GM10248 (cell line): ENCODE measurements at regions of chr19 and their contacts with region 1.

Region 1: GRCh38 chr19:860481-861101 is 1.1 kb downstream of the CFD start:
- DNase-seq: peak; percentile 82
- CTCF ChIP-seq: peak; percentile 27

Region 2: DNA sequence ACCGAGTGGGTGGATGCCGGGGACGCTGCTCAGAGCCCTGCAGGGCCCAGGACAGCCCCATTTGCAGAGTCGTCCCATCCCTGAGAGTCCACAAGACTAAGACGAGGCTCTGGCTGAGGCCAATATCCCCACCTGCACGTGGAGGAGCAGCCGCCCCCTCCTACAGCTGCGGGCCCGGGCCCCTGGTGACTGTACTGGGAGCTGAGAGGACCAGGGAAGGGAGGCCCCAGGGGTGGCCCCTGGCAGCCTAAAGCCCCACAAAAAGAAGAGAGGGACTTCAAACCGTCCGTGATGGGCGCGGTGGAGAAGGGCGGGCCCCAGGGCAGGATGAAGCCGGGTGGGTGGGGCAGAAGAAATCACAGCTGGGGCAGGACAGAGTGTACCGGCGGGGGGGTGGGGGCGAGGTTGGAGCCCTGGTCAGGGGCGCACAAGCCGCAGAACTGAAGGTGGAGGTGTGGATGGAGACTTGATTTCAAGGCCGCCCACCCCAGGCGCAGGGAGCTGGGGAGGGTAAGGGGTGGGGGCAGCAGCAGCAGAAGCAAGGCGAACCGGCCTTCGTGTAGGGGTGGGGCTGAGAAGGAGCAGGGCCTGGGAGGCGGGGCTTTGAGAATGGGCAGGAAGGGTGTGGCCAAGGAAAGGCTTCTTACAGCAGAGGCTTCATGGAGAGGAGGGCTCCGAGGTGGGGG is 11.8 kb after region 1 on chr19:
- CTCF ChIA-PET with region 1: interaction called, 23 read pairs
- POLR2A ChIA-PET with region 1: interaction called, 5 read pairs
- DNase-seq: peak; percentile 79
- CTCF ChIP-seq: no peak

Region 3: DNA sequence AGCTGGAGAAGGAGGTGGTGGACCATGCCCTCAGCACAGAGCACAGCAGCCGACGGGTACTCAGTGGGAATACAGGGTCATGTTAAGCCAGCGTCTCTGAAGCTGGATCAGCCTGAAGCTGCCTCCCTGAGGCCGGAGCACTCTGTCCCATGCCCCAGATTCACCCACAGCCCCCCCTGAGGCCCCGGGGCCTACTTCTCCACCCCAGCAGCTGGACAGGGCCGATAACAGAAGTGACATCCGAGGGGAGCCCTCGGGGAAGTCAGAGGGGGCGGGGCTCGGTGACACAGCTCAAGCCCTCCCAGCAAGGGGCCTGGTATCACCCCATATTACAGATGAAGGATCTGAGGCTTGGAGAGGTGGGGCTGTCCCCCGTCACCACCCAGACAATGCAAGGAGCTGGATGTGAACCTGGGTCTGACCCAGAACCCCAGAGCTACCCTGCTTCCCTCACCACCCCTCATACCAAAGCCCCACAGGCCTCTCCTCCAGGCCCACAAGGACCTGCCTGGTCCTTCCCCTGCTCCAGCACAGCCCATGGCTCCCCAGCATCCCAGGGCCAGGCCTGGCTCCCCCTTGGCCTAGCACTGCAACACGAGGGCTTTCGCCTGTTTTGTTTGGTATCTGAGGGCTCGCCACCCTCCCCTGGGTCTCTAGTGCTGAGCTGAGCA is 46.7 kb after region 1 on chr19:
- CTCF ChIA-PET with region 1: interaction called, 25 read pairs
- POLR2A ChIA-PET with region 1: interaction called, 4 read pairs
- DNase-seq: no peak
- CTCF ChIP-seq: no peak

Region 4: DNA sequence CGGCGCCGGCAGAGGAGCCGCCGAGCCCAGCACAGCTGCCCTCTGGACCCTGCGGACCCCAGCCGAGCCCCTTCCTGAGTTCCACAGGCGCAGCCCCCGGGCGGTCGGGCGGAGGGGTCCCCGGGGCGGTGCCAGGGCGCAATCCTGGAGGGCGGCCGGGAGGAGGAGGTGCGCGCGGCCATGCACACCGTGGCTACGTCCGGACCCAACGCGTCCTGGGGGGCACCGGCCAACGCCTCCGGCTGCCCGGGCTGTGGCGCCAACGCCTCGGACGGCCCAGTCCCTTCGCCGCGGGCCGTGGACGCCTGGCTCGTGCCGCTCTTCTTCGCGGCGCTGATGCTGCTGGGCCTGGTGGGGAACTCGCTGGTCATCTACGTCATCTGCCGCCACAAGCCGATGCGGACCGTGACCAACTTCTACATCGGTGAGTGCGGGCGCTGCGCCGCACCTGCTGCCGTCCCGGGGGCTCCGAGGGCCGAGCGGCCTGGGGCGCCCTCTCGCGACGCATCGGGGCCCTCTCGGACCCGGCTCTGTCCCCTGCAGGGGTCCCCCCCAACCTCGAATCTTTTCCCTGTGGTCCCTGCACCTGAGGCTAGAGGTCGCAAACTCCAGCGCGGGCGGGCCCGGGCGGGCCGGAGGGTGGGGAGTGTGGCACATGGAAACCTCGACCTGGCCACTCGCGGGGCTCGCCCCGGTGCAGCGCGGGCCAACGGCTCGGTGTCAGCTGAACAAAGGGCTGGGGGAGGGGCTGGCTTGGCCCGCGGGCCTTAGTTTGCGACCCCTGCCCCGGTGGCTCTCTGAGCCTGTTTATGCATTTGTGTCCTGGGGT is 56.9 kb after region 1 on chr19 and contains the start of gene KISS1R:
- CTCF ChIA-PET with region 1: interaction called, 26 read pairs
- POLR2A ChIA-PET with region 1: no interaction called
- DNase-seq: peak; percentile 74
- CTCF ChIP-seq: peak; percentile 72

Region 5: GRCh38 chr19:925526-926322 is 65.1 kb after region 1 on chr19 and contains the start of gene ARID3A:
- CTCF ChIA-PET with region 1: interaction called, 24 read pairs
- POLR2A ChIA-PET with region 1: no interaction called
- DNase-seq: peak; percentile 88
- CTCF ChIP-seq: no peak

Region 6: DNA sequence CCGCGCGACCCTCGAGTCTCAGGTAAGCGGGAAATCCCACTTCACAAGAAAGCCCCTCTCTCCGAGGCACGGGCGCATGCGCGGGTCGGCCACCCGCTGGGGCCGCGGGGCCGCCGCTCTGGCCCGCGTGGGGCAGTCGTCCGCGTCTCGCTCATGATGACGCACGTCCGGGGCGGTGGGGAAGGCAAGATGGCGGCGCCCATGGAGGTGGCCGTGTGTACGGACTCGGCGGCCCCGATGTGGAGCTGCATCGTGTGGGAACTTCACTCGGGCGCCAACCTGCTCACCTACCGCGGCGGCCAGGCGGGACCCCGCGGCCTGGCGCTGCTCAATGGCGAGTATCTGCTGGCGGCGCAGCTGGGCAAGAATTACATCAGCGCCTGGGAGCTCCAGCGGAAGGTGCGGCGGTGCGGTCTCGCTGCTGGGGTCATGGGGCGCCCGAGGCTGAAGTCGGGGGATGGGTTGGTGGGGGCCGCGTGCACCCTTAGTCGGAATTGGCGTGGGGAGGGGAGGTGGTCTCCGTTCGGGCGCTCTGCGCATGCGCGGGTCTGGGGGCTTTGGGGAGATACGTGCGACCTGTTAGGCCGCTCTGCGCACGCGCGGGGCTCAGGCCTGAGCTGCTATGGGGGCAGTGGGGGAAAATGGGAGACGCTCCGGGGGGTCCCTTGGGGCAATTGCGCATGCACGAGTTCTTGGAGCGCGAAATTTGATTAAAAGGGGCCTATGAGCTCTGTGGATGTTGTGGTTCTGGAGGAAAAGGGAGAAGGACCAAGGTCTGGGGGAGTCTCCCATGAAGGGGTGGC is 123.8 kb after region 1 on chr19 and contains the start of gene WDR18:
- CTCF ChIA-PET with region 1: interaction called, 28 read pairs
- POLR2A ChIA-PET with region 1: no interaction called
- DNase-seq: peak; percentile 100
- CTCF ChIP-seq: no peak